ENCODE measurements at regions of chr9 and their contacts with region 1.

Region 1: GRCh38 chr9:97598461-97599288 is 34.5 kb downstream of the TSTD2 start:
- DNase-seq: peak; percentile 67 to 84
- ATAC-seq: peak; percentile 34 to 42
- H3K4me3 ChIP-seq: no peak overlapping the region
- H3K27ac ChIP-seq: peak overlapping the region; percentile 83 to 90 (median 88)
- H3K4me1 ChIP-seq: peaks cover 78 to 86% of the 10 kb centered on the region in 2 donors
- H3K27me3 ChIP-seq: no peaks in the 10 kb centered on the region
- CTCF ChIP-seq: peak; percentile 68 to 90 (median 80)
- POLR2A ChIP-seq: no peak

Region 2: DNA sequence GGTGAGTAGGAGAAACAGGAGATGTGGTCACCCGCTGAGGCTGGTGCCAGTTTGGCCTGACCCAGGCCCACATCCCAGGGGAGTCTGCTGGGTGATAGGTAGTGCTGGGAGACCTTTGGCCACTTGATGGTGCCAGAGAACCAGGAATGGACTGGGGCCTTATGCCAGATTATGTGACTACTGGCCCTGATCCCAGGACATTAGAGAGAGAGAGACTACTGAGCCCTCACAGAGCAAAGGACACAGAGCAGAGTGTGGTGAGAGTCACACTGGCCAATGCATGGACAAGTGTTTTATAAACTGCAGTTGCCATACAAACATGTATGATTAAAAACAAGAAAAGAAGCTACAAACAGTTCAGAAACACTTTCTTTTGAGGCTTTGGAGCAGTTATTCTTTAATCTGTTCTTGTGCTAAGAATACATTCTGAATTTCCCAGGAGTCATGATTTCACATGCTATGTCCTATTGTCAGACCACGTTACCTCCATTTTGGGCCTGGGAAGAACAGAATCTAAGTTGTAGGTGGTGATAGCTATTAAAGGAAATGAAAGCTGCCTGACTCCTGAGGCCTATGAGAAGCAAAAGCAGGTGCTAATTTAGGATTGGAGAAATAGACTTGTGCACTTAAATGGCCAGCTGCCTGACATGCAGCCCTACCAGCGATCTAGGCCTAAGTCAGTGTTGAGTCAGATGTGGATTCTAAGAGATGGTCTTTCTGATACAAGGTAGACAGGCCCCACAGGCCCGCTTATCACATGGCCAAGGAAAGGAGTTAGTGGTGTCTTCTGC is 129.8 kb before region 1 on chr9:
- in situ Hi-C with region 1: no loop called
- intact Hi-C with region 1: loop called (anchors 1 kb)
- DNase-seq: peak; percentile 76 to 89
- ATAC-seq: peak; percentile 99 to 100
- H3K4me3 ChIP-seq: no peak overlapping the region
- H3K27ac ChIP-seq: peak overlapping the region; percentile 75 to 84 (median 79)
- H3K4me1 ChIP-seq: peaks cover 7 to 17% of the 10 kb centered on the region in 2 donors
- H3K27me3 ChIP-seq: no peaks in the 10 kb centered on the region
- CTCF ChIP-seq: peak; percentile 88 to 93 (median 90)
- POLR2A ChIP-seq: no peak

Region 3: DNA sequence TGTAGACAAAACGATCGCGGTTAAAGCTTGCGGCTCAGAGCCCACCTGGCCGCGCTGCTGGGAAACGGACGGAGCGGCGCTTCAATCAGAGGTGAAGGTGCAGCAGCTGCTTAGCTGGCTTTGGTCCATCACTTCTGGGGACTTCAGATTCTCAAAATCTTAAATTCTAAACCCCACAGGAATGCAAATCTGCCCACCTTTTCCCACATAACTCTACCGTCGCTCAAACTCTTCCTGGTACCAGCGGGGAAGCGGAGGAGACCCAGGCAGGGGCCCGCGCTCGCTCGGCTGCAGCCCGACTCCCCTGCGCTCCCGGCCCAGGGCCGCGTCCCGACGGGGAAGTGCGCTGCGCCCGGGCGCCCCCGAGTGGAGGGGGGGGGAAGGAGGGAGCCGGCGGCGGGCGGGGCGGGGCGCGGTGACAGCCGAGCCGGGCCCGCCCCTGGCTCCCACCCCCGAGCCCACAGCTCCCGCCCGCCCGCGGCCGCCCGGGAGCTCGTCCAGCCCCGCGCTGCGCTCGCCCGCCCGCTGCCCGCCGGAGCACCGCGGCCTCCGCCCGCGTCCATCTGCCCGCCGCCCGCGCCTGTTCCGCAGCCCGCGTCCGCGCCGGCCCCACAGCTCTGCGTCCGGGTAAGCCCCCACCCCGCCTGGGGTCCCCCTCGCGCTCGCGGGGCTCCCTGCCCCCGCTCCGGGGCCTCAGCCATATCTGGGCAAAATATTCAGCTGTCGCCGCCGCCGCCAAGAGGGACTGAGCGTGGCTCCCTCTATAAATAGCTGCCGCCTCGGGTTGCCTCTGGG is 97.3 kb before region 1 on chr9 and contains the start of gene TMOD1:
- in situ Hi-C with region 1: loop called in 1 of 4 experiments (anchors 10 kb)
- intact Hi-C with region 1: loop called (anchors 2 kb)
- DNase-seq: peak; percentile 69 to 82
- ATAC-seq: peak; percentile 76 to 78
- H3K4me3 ChIP-seq: peak within 1 kb of the TSS; percentile 78 to 93 (median 84)
- H3K27ac ChIP-seq: peak within 1 kb of the TSS; percentile 97 to 98 (median 98)
- H3K4me1 ChIP-seq: peaks cover 35 to 43% of the 10 kb centered on the region in 2 donors
- H3K27me3 ChIP-seq: no peaks in the 10 kb centered on the region
- CTCF ChIP-seq: peak in 1 of 5 experiments; percentile 13
- POLR2A ChIP-seq: no peak
- total RNA-seq, gene TMOD1: 82.3 to 202 (median 175) TPM

Region 4: GRCh38 chr9:97529363-97530076 is 69.2 kb before region 1 on chr9:
- in situ Hi-C with region 1: no loop called
- intact Hi-C with region 1: loop called (anchors 2 kb)
- DNase-seq: peak; percentile 78 to 85
- ATAC-seq: peak; percentile 60 to 70
- H3K4me3 ChIP-seq: no peak overlapping the region
- H3K27ac ChIP-seq: peak overlapping the region; percentile 95 to 98 (median 98)
- H3K4me1 ChIP-seq: peaks cover 93 to 94% of the 10 kb centered on the region in 2 donors
- H3K27me3 ChIP-seq: no peaks in the 10 kb centered on the region
- CTCF ChIP-seq: no peak
- POLR2A ChIP-seq: peak in 1 of 2 donors; percentile 20

Region 5: GRCh38 chr9:97536480-97536879 is 62.2 kb before region 1 on chr9:
- in situ Hi-C with region 1: no loop called
- intact Hi-C with region 1: loop called (anchors 5 kb)
- DNase-seq: peak; percentile 80 to 88
- ATAC-seq: peak; percentile 68 to 72
- H3K4me3 ChIP-seq: no peak overlapping the region
- H3K27ac ChIP-seq: peak overlapping the region; percentile 82 to 98 (median 96)
- H3K4me1 ChIP-seq: peaks cover 60 to 62% of the 10 kb centered on the region in 2 donors
- H3K27me3 ChIP-seq: no peaks in the 10 kb centered on the region
- CTCF ChIP-seq: no peak
- POLR2A ChIP-seq: no peak

Region 6: DNA sequence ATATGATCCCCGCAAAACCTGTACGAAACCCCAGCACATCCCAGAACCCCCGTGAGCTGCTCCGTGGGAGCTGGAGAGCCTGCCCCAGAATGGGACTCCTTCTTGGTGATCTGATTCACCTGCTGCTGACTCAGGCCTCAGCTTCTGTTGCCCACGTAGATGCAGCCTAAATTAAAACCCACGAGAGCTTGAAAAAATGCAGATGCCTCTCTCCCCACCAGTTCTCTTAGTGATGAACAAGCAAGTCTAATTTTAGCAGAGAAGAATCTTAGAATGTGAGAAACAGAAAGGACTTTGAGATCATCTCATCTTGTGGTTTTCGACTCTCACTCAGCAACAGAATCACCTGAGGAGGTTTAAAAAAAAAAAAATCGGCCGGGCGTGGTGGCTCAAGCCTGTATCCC is 39.6 kb before region 1 on chr9:
- in situ Hi-C with region 1: no loop called
- intact Hi-C with region 1: loop called (anchors 5 kb)
- DNase-seq: peak; percentile 35 to 64
- ATAC-seq: peak; percentile 47 to 55
- H3K4me3 ChIP-seq: peak overlapping the region in 1 of 4 donors; percentile 5
- H3K27ac ChIP-seq: peak overlapping the region; percentile 79 to 95 (median 88)
- H3K4me1 ChIP-seq: peaks cover 30 to 54% of the 10 kb centered on the region in 2 donors
- H3K27me3 ChIP-seq: no peaks in the 10 kb centered on the region
- CTCF ChIP-seq: no peak
- POLR2A ChIP-seq: peak in 1 of 2 donors; percentile 62

Region 7: GRCh38 chr9:97660340-97660739 is 61.7 kb after region 1 on chr9:
- in situ Hi-C with region 1: no loop called
- intact Hi-C with region 1: no loop called
- DNase-seq: no peak
- ATAC-seq: no peak
- H3K4me3 ChIP-seq: no peak overlapping the region
- H3K27ac ChIP-seq: peak overlapping the region in 1 of 4 donors; percentile 0
- H3K4me1 ChIP-seq: no peaks in the 10 kb centered on the region
- H3K27me3 ChIP-seq: no peaks in the 10 kb centered on the region
- CTCF ChIP-seq: no peak
- POLR2A ChIP-seq: no peak